Activated CD4-positive, alpha-beta memory T cell treated with anti-CD3 and anti-CD28 coated beads, Interleukin-2, amount 10 ng/mL, durations not matched to agents 7 days and 5 days (primary cell): ENCODE measurements at regions of chr1 and their contacts with region 1.

Region 1: GRCh38 chr1:235791532-235792060 is 75.1 kb downstream of the LYST start:
- DNase-seq: no peak
- H3K4me3 Mint-ChIP-seq: no peak overlapping the region
- H3K27ac Mint-ChIP-seq: no peak overlapping the region
- H3K4me1 Mint-ChIP-seq: no peaks in the 10 kb centered on the region
- H3K27me3 Mint-ChIP-seq: no peaks in the 10 kb centered on the region

Region 2: GRCh38 chr1:235843461-235843961 is 51.9 kb after region 1 on chr1:
- CTCF ChIA-PET with region 1: interaction called, 10 read pairs
- POLR2A ChIA-PET with region 1: no interaction called
- DNase-seq: no peak
- H3K4me3 Mint-ChIP-seq: no peak overlapping the region
- H3K27ac Mint-ChIP-seq: no peak overlapping the region
- H3K4me1 Mint-ChIP-seq: peaks cover 33% of the 10 kb centered on the region
- H3K27me3 Mint-ChIP-seq: no peaks in the 10 kb centered on the region